ENCODE measurements at regions of chr1 and their contacts with region 1.

Region 1: DNA sequence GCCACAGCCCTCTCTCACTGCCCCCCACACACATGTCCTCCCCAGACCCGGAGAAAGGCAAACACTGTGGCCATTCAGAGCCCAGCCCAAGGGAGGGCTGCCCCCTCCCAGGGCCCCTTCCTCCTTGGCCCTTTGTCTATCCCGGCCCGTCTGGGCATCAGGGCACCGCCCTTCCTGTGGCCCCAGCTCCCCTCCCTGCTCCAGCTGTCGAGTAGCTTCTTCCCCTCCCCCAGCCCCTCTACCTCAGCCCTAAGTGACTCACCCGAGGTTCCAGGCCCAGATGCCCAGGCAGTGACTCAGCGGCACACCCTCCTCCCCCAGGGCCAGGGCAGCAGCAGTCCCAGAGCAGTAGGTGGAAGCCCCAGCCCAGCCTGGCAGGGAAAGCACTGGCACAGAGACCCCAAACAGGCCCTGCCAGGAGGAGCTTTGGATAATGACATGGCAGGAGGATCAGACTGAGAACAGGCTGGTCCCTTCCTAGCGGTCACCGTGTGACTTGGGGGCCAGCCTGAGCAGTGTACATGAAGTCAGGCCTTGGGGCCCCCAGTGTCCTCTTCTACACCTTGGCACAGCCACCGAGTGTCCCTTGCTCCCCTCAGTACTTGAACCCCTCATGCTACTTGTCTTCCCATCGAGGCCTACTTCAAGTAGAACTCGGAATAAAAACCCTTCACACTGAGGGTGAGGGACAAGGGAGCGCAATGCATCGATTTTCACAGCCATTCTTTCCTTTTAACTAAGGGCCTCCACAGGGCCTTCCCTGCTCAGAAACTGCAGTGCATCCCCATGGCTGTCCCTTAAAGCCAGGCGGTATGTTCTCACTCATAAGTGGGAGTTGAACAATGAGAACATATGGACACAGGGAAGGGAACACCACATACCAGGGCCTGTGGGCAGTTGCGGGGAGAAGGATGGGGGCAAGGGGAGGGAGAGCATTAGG is 1.1 kb upstream of the S100A2 start:
- DNase-seq: peak; percentile 96
- H3K4me3 ChIP-seq: no peak overlapping the region
- H3K27ac ChIP-seq: peak overlapping the region; percentile 99
- H3K4me1 ChIP-seq: peaks cover 34% of the 10 kb centered on the region
- H3K27me3 ChIP-seq: no peaks in the 10 kb centered on the region
- CTCF ChIP-seq: no peak
- POLR2A ChIP-seq: no peak

Region 2: GRCh38 chr1:153545067-153546055 is 21.3 kb before region 1 on chr1 and contains the start of gene S100A4:
- CTCF ChIA-PET with region 1: interaction called, 13 read pairs
- POLR2A ChIA-PET with region 1: interaction called, 3 read pairs
- dilution Hi-C with region 1: no loop called
- intact Hi-C with region 1: loop called (anchors 1 kb)
- DNase-seq: peak; percentile 91
- H3K4me3 ChIP-seq: no peak within 1 kb of the TSS
- H3K27ac ChIP-seq: no peak within 1 kb of the TSS
- H3K4me1 ChIP-seq: peaks cover 21% of the 10 kb centered on the region
- H3K27me3 ChIP-seq: no peaks in the 10 kb centered on the region
- CTCF ChIP-seq: no peak
- POLR2A ChIP-seq: no peak
- total RNA-seq, gene S100A4: not detected in 2 replicates

Region 3: GRCh38 chr1:153760440-153760839 is 193.7 kb after region 1 on chr1:
- CTCF ChIA-PET with region 1: no interaction called
- POLR2A ChIA-PET with region 1: no interaction called
- dilution Hi-C with region 1: no loop called
- intact Hi-C with region 1: no loop called
- DNase-seq: no peak
- H3K4me3 ChIP-seq: no peak overlapping the region
- H3K27ac ChIP-seq: no peak overlapping the region
- H3K4me1 ChIP-seq: peaks cover 30% of the 10 kb centered on the region
- H3K27me3 ChIP-seq: no peaks in the 10 kb centered on the region
- CTCF ChIP-seq: no peak
- POLR2A ChIP-seq: no peak

Region 4: DNA sequence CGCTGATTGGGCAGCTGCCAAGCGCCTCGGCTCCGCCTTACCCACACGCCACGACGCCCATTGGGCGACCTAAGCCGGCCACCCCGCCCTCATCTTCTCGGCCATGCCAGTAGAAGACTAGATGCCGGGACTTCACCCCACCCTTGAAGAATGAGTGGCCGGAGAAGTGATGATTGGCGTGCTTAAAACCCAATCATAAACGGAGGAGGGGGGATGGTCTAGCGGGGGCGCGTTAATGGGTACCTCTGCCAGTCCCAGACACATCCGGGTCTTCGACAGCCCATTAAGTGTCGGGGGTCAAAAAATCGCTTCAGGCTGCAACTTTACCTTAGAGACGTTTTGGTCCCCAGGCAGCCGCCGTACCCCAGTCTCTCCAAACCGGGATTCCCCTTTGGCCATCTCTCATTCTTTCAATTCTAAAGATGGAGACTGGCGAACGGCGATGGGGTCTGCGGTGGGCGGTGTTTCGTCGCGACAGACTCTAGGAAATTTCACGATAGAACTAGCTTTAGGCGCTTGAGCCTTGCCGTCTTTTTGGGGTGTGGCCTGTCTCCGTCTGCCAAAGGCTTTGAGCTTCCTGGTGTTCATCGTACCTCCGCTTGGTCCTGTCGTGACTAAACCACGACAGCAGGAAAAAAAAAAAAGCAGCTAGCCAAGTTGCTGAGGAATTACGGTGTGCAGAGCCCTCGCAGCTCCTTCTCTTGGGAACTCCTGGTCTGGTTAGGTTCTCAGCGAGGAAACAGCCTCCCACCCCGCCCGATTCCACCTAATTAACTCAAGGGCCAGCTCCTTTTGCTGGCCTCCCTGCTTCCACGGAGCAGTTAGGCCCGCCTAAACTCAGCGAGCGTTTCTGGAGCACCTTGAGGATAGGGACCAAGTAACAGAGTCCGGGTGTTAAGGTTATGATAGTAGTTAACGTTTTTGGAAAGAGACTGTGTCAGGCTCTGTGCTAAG is 356.5 kb after region 1 on chr1 and contains the start of gene GATAD2B:
- CTCF ChIA-PET with region 1: no interaction called
- POLR2A ChIA-PET with region 1: no interaction called
- dilution Hi-C with region 1: no loop called
- intact Hi-C with region 1: no loop called
- DNase-seq: peak; percentile 100
- H3K4me3 ChIP-seq: peak within 1 kb of the TSS; percentile 68 to 91 (median 85)
- H3K27ac ChIP-seq: peak within 1 kb of the TSS; percentile 60
- H3K4me1 ChIP-seq: peaks cover 24% of the 10 kb centered on the region
- H3K27me3 ChIP-seq: no peaks in the 10 kb centered on the region
- CTCF ChIP-seq: no peak
- POLR2A ChIP-seq: peak; percentile 80
- total RNA-seq, gene GATAD2B: 46.3 and 49.2 TPM in 2 replicates

Measured in endothelial cell of umbilical vein (primary cell).